ENCODE measurements at regions of chr7 and their contacts with region 1.

Region 1: DNA sequence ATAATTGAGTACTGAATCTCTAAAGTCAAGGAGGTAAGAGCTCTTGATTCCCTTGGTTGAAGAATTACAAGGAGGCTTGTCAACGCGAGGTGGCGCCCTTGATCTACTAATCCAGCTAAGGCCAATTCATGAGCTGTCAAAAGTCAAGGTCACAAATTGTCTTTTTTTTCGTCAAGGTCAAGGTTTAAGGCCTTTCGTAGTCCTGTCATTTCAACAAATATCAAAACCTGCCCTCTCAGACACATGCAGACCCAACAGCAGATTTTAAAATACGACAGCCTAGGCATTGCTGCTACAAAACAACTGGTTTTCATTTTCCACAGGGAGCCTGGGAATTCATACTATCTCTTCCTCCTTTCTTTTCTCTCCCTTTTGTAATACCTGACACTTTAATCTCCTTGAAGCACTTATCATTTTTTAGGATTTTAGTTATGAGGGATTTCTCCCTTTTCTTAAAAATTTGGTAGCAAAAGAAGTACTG is 3.6 kb downstream of the HOXA13 start:
- DNase-seq: peak; percentile 94
- ATAC-seq: peak; percentile 32
- H3K4me3 Mint-ChIP-seq: no peak overlapping the region
- H3K27ac Mint-ChIP-seq: no peak overlapping the region
- H3K4me1 Mint-ChIP-seq: peaks cover 31% of the 10 kb centered on the region
- H3K27me3 Mint-ChIP-seq: peaks cover 78% of the 10 kb centered on the region
- CTCF ChIP-seq: peak; percentile 84

Region 2: DNA sequence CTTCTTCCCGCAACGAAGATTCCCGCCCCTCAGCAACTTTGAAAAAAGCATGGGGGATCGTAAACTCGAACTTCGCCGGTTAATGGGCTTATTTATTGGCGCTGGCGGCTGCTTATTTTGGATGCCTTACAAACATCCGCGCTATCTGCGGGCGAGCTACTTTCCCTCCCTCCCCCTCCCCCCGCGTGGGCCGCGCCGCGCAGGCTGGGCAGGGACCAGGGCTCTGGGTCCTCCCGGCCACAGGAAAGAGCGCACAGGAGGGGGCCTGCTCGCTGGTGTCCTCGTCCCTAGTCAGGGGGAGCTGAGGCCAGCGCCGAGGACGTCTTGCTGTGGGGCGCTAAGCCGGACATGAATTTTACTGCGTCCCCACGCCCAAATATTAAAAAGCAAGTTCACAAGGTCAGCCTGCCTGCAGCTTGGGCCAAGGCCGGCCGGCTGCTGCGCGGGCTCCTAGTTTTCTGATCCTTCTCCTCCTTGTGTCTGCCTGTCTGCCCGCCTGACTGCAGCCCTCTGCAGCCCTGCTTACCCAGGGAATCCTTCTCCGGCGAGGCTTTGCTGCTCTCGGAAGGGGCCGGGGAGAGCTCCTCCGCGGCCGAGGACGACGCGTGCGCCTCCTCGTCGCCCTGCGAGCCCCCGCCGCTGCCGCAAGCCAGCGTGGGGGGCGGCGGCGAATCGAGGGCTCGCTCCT is 23.4 kb before region 1 on chr7:
- CTCF ChIA-PET with region 1: interaction called, 16 read pairs
- POLR2A ChIA-PET with region 1: no interaction called
- intact Hi-C with region 1: loop called (anchors 5 kb)
- DNase-seq: no peak
- ATAC-seq: peak; percentile 32
- H3K4me3 Mint-ChIP-seq: peak overlapping the region; percentile 7
- H3K27ac Mint-ChIP-seq: no peak overlapping the region
- H3K4me1 Mint-ChIP-seq: peaks cover 20% of the 10 kb centered on the region
- H3K27me3 Mint-ChIP-seq: peaks cover 72% of the 10 kb centered on the region
- CTCF ChIP-seq: no peak

Region 3: GRCh38 chr7:27210441-27211083 is 14.2 kb after region 1 on chr7:
- CTCF ChIA-PET with region 1: interaction called, 25 read pairs
- POLR2A ChIA-PET with region 1: no interaction called
- intact Hi-C with region 1: no loop called
- DNase-seq: peak; percentile 72
- ATAC-seq: peak; percentile 80
- H3K4me3 Mint-ChIP-seq: peak overlapping the region; percentile 30
- H3K27ac Mint-ChIP-seq: no peak overlapping the region
- H3K4me1 Mint-ChIP-seq: peaks cover 12% of the 10 kb centered on the region
- H3K27me3 Mint-ChIP-seq: peaks cover 90% of the 10 kb centered on the region
- CTCF ChIP-seq: peak; percentile 85

Region 4: GRCh38 chr7:27784393-27785053 is 588.2 kb after region 1 on chr7:
- CTCF ChIA-PET with region 1: no interaction called
- POLR2A ChIA-PET with region 1: no interaction called
- intact Hi-C with region 1: loop called (anchors 5 kb)
- DNase-seq: peak; percentile 29
- ATAC-seq: peak; percentile 85
- H3K4me3 Mint-ChIP-seq: no peak overlapping the region
- H3K27ac Mint-ChIP-seq: no peak overlapping the region
- H3K4me1 Mint-ChIP-seq: peaks cover 31% of the 10 kb centered on the region
- H3K27me3 Mint-ChIP-seq: no peaks in the 10 kb centered on the region
- CTCF ChIP-seq: peak; percentile 66